ENCODE measurements at regions of chr9 and their contacts with region 1.

Region 1: GRCh38 chr9:115013998-115014397 is 83.6 kb upstream of the TNFSF8 start:
- DNase-seq: peak; percentile 89
- H3K4me3 ChIP-seq: no peak overlapping the region
- H3K27ac ChIP-seq: no peak overlapping the region
- H3K4me1 ChIP-seq: peaks cover 0 to 52% (median 37%) of the 10 kb centered on the region in 4 donors
- H3K27me3 ChIP-seq: no peaks in the 10 kb centered on the region
- CTCF ChIP-seq: peak; percentile 66 to 81 (median 76)
- EP300 ChIP-seq: no peak
- POLR2A ChIP-seq: no peak

Region 2: DNA sequence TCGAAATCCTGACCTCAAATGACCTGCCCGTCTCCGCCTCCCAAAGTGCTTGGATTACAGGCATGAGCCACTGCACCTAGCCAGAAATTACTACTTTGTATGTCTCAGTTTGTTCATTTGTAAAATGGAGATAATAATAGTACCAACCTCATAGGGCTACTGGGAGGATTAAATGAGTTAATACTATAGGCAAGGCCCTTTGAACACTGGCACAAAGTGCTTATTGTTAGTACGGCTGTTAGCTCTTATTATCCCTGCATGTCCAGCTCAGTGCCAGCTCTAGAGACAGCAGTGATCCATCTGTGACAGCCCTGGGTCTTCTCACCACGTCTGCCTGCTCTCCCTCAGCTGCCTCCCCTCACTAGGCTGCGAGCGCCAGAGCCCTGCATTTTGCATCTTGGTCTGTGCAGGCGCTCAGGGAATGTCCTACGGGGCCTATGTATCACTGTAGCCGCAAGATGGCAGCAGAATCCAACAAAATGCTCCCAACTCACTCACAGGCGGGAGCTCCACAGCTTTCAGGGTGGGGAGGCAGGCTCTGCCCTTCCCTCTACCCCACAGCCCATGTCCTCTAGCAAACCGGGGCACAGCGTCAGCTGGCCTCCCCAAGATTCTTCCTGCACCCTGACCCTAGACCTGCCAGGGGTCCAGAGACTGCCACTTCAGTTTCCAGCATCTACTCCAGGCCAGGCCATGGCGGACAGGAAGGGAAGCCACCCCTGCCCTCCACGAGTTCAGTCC is 608.5 kb before region 1 on chr9:
- intact Hi-C with region 1: loop called (anchors 5 kb)
- DNase-seq: peak; percentile 87
- H3K4me3 ChIP-seq: no peak overlapping the region
- H3K27ac ChIP-seq: no peak overlapping the region
- H3K4me1 ChIP-seq: peaks cover 0 to 5% (median 0%) of the 10 kb centered on the region in 4 donors
- H3K27me3 ChIP-seq: no peaks in the 10 kb centered on the region
- CTCF ChIP-seq: peak; percentile 56 to 78 (median 72)
- EP300 ChIP-seq: no peak
- POLR2A ChIP-seq: no peak

Region 3: DNA sequence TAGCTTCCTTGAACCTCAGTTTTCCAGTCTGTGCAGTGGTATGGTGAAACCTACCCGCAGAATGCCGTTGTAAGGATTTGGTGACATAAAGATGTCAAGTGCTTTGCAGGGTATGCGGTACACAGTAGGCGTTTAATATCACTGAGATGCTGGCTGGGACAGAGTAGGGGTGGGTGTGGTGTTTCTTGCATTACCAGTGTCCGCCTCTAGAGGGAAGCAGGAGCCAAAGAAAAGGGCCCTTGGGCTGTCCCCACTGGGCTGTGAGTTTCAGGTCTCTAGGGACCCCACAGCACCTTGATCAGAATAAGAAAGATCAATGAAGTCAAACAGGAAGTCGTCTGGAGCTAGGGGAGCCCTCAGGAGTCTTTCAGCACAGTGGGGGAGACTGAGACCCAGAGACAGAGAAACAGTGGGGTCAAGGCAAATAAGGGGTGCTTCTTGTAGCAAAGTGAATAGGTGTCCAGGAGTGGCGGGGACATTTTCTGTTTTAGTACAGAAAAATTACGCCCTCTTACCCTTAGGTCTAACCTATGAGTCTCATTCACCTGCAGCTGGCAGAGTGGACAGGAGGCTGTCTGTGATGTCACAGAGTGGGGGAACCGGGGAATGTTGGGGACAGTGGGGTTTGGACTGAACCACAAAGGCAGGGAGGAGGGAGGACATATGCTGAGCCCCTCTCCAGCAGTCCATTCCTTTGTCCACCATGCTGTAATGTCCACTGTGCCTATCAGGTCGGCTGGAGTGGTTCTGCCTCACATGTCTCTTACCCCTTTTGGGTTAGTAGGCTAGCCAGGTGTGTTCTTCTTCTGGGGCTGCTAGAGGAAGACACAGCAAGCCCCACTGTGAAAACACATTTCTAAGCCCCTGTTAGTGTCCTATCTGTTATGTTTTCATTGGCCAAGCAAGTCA is 351.7 kb before region 1 on chr9:
- intact Hi-C with region 1: loop called (anchors 5 kb)
- DNase-seq: no peak
- H3K4me3 ChIP-seq: no peak overlapping the region
- H3K27ac ChIP-seq: no peak overlapping the region
- H3K4me1 ChIP-seq: no peaks in the 10 kb centered on the region
- H3K27me3 ChIP-seq: no peaks in the 10 kb centered on the region
- CTCF ChIP-seq: peak; percentile 41 to 90 (median 69)
- EP300 ChIP-seq: no peak
- POLR2A ChIP-seq: no peak

Region 4: GRCh38 chr9:114738581-114739316 is 275.2 kb before region 1 on chr9:
- intact Hi-C with region 1: loop called (anchors 1 kb)
- DNase-seq: peak; percentile 86
- H3K4me3 ChIP-seq: no peak overlapping the region
- H3K27ac ChIP-seq: no peak overlapping the region
- H3K4me1 ChIP-seq: no peaks in the 10 kb centered on the region
- H3K27me3 ChIP-seq: no peaks in the 10 kb centered on the region
- CTCF ChIP-seq: peak; percentile 65 to 80 (median 74)
- EP300 ChIP-seq: no peak
- POLR2A ChIP-seq: no peak

Region 5: DNA sequence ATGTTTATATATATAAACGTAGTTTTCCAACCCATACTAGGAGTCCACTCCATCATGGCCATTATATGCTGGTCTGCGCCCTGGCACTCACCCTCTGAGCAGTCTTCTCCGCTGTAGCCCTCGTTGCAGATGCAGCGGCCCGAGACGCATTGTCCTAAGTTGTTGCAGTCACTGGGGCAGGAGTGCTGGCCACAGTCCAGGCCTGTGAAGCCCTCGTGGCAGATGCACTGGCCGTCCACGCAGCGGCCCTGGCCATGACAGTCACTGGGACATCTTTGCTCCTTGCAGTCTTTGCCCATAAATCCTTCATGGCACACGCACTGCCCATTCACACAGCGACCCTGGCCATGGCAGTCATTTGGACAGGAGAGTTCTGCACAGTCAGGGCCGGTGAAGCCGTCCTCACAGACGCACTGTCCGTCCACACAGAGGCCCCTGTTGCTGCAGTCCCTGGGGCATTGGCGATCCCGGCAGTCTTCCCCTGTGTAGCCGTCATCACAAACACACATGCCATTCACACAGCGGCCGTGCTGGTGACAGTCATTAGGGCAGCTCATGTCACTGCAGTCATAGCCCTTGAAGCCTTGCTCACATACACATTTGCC is 71.9 kb after region 1 on chr9:
- intact Hi-C with region 1: no loop called
- DNase-seq: peak; percentile 82
- H3K4me3 ChIP-seq: no peak overlapping the region
- H3K27ac ChIP-seq: peak overlapping the region in 3 of 4 donors; percentile 55 to 74 (median 64)
- H3K4me1 ChIP-seq: peaks cover 0 to 73% (median 48%) of the 10 kb centered on the region in 4 donors
- H3K27me3 ChIP-seq: no peaks in the 10 kb centered on the region
- CTCF ChIP-seq: no peak
- EP300 ChIP-seq: no peak
- POLR2A ChIP-seq: no peak

Region 6: GRCh38 chr9:115211413-115212124 is 197.6 kb after region 1 on chr9:
- intact Hi-C with region 1: loop called (anchors 5 kb)
- DNase-seq: no peak
- H3K4me3 ChIP-seq: no peak overlapping the region
- H3K27ac ChIP-seq: peak overlapping the region in 3 of 4 donors; percentile 37 to 77 (median 44)
- H3K4me1 ChIP-seq: peaks cover 0 to 44% (median 32%) of the 10 kb centered on the region in 4 donors
- H3K27me3 ChIP-seq: no peaks in the 10 kb centered on the region
- CTCF ChIP-seq: no peak
- EP300 ChIP-seq: no peak
- POLR2A ChIP-seq: no peak

Region 7: DNA sequence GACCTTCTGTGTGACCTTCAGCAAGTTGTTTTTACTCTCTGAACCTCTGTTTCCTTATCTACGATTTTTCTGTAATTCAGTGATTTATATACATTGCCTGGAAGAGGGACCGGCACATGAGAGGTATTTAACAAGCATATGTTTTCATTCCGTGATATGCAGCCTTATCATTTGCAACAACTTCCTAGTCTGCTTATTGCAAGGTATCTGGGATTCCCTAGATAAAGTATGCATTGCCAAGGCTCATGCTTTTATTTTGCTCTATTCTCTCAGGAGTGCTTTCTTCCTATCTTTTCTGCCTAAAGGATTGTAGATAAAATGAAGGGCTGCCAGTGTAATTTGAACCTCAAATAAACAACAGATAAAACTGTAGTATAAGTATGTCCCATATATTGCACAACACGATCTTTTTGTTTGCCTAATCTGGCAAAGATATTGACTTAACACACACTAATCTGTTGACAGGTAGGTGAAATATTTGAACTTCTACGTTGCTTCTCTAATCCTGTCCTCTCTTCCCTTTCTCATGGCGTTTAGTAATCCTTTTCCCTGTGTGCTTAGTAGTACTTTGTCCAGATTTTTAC is 481.1 kb after region 1 on chr9:
- intact Hi-C with region 1: loop called (anchors 10 kb)
- DNase-seq: no peak
- H3K4me3 ChIP-seq: no peak overlapping the region
- H3K27ac ChIP-seq: no peak overlapping the region
- H3K4me1 ChIP-seq: peaks cover 0 to 13% (median 6%) of the 10 kb centered on the region in 4 donors
- H3K27me3 ChIP-seq: no peaks in the 10 kb centered on the region
- CTCF ChIP-seq: no peak
- EP300 ChIP-seq: no peak
- POLR2A ChIP-seq: no peak